Activated CD4-positive, alpha-beta T cell treated with anti-CD3 and anti-CD28 coated beads for 36 hours (primary cell): ENCODE measurements at regions of chr10 and their contacts with region 1.

Region 1: GRCh38 chr10:88091490-88092105 is 228.2 kb downstream of the PTEN start:
- DNase-seq: peak; percentile 87
- ATAC-seq: peak; percentile 98
- H3K4me3 Mint-ChIP-seq: no peak overlapping the region
- H3K27ac Mint-ChIP-seq: peak overlapping the region; percentile 55
- H3K4me1 Mint-ChIP-seq: peaks cover 33% of the 10 kb centered on the region
- H3K27me3 Mint-ChIP-seq: peaks cover 32% of the 10 kb centered on the region

Region 2: DNA sequence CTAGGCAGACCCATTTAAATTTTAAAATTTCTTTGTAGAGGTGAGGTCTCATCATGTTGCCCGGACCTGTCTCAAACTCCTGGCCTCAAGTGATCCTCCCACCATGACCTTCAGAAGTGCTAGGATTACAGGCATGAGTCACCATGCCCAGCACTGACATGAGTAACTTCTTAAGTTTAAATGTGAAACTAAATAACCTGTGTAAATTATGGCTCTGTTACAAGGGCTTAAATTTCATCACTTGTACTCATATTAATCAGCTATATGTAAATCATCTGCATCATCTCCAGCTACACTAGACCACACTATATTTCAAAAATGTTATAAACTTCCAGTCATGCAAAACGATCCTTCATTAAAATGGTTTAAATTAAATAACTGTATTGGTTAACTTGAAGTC is 329.7 kb before region 1 on chr10:
- CTCF ChIA-PET with region 1: no interaction called
- POLR2A ChIA-PET with region 1: interaction called, 3 read pairs
- intact Hi-C with region 1: loop called in 1 of 2 experiments (anchors 5 kb)
- DNase-seq: peak; percentile 78
- ATAC-seq: peak; percentile 96
- H3K4me3 Mint-ChIP-seq: no peak overlapping the region
- H3K27ac Mint-ChIP-seq: peak overlapping the region; percentile 78
- H3K4me1 Mint-ChIP-seq: peaks cover 44% of the 10 kb centered on the region
- H3K27me3 Mint-ChIP-seq: no peaks in the 10 kb centered on the region

Region 3: GRCh38 chr10:87861953-87862678 is 229.5 kb before region 1 on chr10:
- CTCF ChIA-PET with region 1: interaction called, 4 read pairs
- POLR2A ChIA-PET with region 1: interaction called, 10 read pairs
- intact Hi-C with region 1: loop called (anchors 1 kb)
- DNase-seq: peak; percentile 96
- ATAC-seq: peak; percentile 66
- H3K4me3 Mint-ChIP-seq: peak overlapping the region; percentile 91
- H3K27ac Mint-ChIP-seq: peak overlapping the region; percentile 92
- H3K4me1 Mint-ChIP-seq: peaks cover 30% of the 10 kb centered on the region
- H3K27me3 Mint-ChIP-seq: no peaks in the 10 kb centered on the region

Region 4: DNA sequence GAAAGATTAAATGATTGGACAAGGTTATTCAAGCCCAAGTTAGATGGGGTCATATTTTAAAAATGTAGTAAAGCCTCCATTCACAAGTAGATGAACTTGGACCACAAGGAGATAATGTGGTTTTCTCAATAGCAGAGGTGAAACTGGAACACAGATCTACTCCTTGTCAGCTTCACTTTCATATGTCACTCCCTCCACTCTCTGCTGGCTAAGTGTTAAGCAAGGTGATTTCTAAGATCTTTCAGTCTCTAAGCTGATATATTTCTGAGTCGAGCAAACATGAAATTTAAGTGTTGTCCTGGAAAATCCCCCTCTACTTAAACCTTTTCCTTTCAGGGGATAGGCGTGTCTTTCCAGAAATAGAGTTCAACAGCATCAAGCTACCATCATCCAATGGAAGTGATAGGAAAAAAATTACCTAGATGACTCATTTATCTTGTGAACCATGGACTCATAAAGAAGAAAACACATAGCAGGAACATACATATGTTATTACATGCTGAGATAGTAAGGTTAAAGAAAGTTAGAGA is 46.8 kb after region 1 on chr10:
- CTCF ChIA-PET with region 1: no interaction called
- POLR2A ChIA-PET with region 1: interaction called, 6 read pairs
- intact Hi-C with region 1: loop called (anchors 1 kb)
- DNase-seq: no peak
- ATAC-seq: peak; percentile 97
- H3K4me3 Mint-ChIP-seq: no peak overlapping the region
- H3K27ac Mint-ChIP-seq: no peak overlapping the region
- H3K4me1 Mint-ChIP-seq: peaks cover 9% of the 10 kb centered on the region
- H3K27me3 Mint-ChIP-seq: no peaks in the 10 kb centered on the region

Region 5: DNA sequence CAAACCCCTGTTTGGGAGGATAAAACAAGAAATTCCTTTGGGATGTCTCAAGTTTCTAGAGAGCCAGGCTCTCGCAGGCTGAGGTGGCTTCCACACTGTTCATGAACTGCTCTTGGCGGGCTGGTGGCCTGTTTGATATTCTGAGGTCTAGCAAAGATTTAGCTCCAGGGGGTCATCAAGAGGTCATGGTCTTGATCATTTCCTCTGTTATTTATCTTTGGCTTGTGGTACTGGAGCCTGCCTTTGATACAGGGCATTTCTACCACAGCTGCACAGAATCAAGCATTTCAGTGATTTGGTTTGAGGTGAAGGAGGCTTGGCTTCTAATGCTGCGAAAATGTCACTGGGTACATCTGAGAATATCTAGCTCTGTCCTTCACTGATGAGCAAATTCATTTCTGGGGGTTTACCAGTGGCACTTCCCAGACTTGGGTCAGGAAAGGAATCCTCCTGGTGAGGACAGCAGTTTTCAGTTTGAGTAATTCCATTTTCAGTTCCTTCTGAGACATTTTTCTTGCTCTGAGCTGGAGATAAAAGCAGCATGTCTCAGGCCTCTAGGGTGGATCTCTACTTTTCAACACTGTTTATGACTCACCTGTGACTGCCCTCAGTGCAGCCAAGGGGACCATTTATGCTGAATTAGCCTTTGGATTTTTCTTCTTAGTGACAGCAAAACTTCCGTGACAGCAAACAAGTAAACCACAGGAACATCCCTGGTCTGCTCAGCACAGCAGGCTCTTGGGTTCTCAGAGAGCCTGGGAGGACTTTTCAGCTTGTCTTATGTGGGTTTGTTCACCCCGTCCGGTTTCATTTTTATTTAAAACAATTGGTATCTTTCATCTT is 179.5 kb after region 1 on chr10:
- CTCF ChIA-PET with region 1: interaction called, 5 read pairs
- POLR2A ChIA-PET with region 1: interaction called, 7 read pairs
- intact Hi-C with region 1: loop called (anchors 1 kb)
- DNase-seq: peak; percentile 65
- ATAC-seq: peak; percentile 93
- H3K4me3 Mint-ChIP-seq: no peak overlapping the region
- H3K27ac Mint-ChIP-seq: peak overlapping the region; percentile 64
- H3K4me1 Mint-ChIP-seq: peaks cover 37% of the 10 kb centered on the region
- H3K27me3 Mint-ChIP-seq: peaks cover 3% of the 10 kb centered on the region

Region 6: DNA sequence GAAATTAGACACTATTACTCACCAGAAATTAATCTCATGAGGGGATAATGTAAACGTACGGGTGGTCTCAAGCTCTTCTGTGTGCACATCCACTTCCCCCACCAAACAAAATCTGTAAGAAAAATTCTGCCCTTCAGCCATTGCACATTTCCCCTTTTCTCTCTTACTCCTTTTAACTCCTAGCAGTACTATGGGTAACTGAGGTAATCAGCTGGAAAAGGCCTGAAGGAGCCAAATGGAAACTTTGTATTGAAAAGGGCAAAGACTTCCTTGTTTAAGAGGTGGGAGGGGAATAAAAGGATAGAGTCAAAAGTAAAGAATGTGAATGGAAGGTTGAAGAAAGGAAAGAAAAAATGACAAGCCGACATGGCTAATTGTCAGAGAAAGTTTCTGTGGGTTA is 217.8 kb after region 1 on chr10:
- CTCF ChIA-PET with region 1: no interaction called
- POLR2A ChIA-PET with region 1: no interaction called
- intact Hi-C with region 1: no loop called
- DNase-seq: no peak
- ATAC-seq: no peak
- H3K4me3 Mint-ChIP-seq: no peak overlapping the region
- H3K27ac Mint-ChIP-seq: no peak overlapping the region
- H3K4me1 Mint-ChIP-seq: peaks cover 5% of the 10 kb centered on the region
- H3K27me3 Mint-ChIP-seq: no peaks in the 10 kb centered on the region

Region 7: DNA sequence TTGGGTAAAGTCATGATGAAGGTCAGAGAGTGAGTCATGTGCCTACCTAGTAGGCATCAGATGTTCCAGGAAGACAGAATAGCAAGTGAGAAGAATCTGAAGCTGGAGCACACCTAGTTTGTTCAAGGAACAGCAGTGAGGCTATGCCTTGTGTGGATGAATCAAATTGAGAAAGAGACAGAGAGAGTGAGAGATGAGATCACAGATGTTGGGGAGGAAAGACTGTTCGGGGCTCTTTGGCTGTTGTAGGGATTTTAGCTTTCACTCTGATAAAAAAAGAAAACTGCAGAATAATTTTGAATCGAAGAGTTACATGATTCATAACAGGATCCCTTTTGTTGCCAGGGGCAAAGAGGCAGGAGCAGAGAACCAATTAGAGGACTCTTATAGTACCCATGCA is 578.9 kb after region 1 on chr10:
- CTCF ChIA-PET with region 1: no interaction called
- POLR2A ChIA-PET with region 1: no interaction called
- intact Hi-C with region 1: loop called in 1 of 2 experiments (anchors 1 kb)
- DNase-seq: peak; percentile 40
- ATAC-seq: peak; percentile 99
- H3K4me3 Mint-ChIP-seq: no peak overlapping the region
- H3K27ac Mint-ChIP-seq: peak overlapping the region; percentile 11
- H3K4me1 Mint-ChIP-seq: peaks cover 25% of the 10 kb centered on the region
- H3K27me3 Mint-ChIP-seq: peaks cover 18% of the 10 kb centered on the region